MCF 10A (cell line): ENCODE measurements at regions of chr7 and their contacts with region 1.

Region 1: GRCh38 chr7:100509231-100509630 is 25.5 kb downstream of the NYAP1 start:
- DNase-seq: peak; percentile 95
- H3K4me3 Mint-ChIP-seq: peak overlapping the region; percentile 17
- H3K27ac Mint-ChIP-seq: peak overlapping the region; percentile 57
- H3K4me1 Mint-ChIP-seq: peaks cover 18% of the 10 kb centered on the region
- H3K27me3 Mint-ChIP-seq: no peaks in the 10 kb centered on the region
- CTCF ChIP-seq: no peak

Region 2: GRCh38 chr7:100545360-100546128 is 36.3 kb after region 1 on chr7:
- CTCF ChIA-PET with region 1: interaction called, 3 read pairs
- POLR2A ChIA-PET with region 1: interaction called, 11 read pairs
- intact Hi-C with region 1: no loop called
- DNase-seq: peak; percentile 94
- H3K4me3 Mint-ChIP-seq: peak overlapping the region; percentile 1
- H3K27ac Mint-ChIP-seq: peak overlapping the region; percentile 78
- H3K4me1 Mint-ChIP-seq: peaks cover 48% of the 10 kb centered on the region
- H3K27me3 Mint-ChIP-seq: no peaks in the 10 kb centered on the region
- CTCF ChIP-seq: no peak

Region 3: GRCh38 chr7:100632951-100633717 is 123.9 kb after region 1 on chr7:
- CTCF ChIA-PET with region 1: no interaction called
- POLR2A ChIA-PET with region 1: no interaction called
- intact Hi-C with region 1: no loop called
- DNase-seq: no peak
- H3K4me3 Mint-ChIP-seq: no peak overlapping the region
- H3K27ac Mint-ChIP-seq: no peak overlapping the region
- H3K4me1 Mint-ChIP-seq: no peaks in the 10 kb centered on the region
- H3K27me3 Mint-ChIP-seq: peaks cover 29% of the 10 kb centered on the region
- CTCF ChIP-seq: no peak